Gastrocnemius medialis (tissue), 4 donors: ENCODE measurements at regions of chr7 and their contacts with region 1.

Region 1: DNA sequence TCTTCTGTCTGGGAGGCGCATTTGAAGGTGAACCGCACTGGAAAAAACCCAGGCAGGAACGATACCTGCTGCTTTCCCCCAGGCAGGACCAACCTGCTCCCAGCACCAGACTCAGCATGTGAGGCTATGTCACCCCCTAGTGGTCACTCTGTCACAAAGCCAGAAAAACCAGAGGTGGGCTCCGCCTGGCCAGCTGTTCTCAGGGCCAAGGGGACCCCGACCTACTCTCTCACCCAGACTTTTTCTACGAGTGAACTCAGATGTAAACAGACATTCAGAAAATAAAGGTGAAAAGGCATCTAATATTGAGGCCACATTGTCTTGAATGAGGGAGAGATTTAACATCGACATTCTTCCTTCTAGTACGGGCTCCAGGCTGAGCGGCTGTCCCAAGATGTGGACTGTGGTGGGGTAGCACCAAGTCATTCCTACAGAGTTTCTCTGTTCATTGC is 117.3 kb downstream of the PRKAG2 start:
- DNase-seq: peak in 1 of 2 donors; percentile 49
- ATAC-seq: peak; percentile 62 to 69
- H3K4me3 ChIP-seq: no peak overlapping the region
- H3K27ac ChIP-seq: no peak overlapping the region
- H3K4me1 ChIP-seq: peaks cover 13 to 14% of the 10 kb centered on the region in 2 donors
- H3K27me3 ChIP-seq: no peaks in the 10 kb centered on the region
- CTCF ChIP-seq: peak; percentile 83 to 93 (median 91)
- POLR2A ChIP-seq: no peak

Region 2: DNA sequence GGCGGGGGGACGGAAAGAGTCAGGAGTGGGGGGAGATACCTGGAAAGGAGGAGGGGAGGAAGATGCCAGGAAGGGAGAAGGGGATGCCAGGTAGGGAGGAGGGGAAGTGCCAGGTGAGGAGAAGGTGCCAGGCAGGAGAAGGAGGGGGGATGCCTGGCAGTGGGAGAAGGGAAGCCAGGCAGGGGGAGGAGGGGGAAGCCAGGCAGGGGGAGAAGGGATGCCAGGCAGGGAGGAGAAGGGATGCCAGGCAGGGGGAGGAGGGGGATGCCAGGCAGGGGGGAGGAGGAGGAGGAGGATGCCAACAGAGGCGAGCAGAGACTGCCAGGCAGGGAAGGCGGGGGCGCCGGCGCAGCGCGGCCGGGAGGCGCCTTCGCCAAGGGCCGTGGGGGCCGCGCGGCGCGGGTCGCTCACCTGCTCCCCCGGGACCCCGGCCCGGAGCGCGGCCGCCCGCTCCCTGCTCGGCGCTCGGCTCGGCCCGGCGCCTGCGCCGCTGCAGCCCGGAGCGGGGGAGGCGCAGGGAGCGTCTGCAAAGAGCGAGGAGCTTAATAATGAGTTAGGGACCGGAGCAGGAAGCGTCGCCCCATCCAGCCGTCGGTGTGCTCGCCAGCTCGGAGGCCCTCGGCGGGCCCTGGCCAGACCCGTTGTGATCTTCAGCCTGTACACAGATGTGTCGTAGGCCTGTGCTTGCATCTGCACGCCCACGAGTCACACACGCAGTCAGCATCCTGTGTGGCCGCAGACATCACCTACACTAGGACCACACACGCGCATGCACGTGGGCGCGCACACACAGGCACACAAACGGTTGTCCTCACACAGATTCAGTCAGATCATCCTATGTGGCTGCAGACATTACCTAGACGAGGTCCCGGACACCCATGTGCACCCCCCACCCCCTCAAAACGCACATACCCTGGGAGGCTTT is 482.7 kb before region 1 on chr7:
- in situ Hi-C with region 1: no loop called
- intact Hi-C with region 1: no loop called
- DNase-seq: no peak
- ATAC-seq: peak; percentile 33 to 36
- H3K4me3 ChIP-seq: peak overlapping the region; percentile 38 to 43 (median 40)
- H3K27ac ChIP-seq: no peak overlapping the region
- H3K4me1 ChIP-seq: peaks cover 5 to 17% of the 10 kb centered on the region in 2 donors
- H3K27me3 ChIP-seq: no peaks in the 10 kb centered on the region
- CTCF ChIP-seq: no peak
- POLR2A ChIP-seq: peak in 1 of 2 donors; percentile 8

Region 3: GRCh38 chr7:151315038-151315655 is 444.5 kb before region 1 on chr7:
- in situ Hi-C with region 1: no loop called
- intact Hi-C with region 1: loop called (anchors 1 kb)
- DNase-seq: peak; percentile 31 to 59
- ATAC-seq: peak; percentile 65 to 72
- H3K4me3 ChIP-seq: no peak overlapping the region
- H3K27ac ChIP-seq: no peak overlapping the region
- H3K4me1 ChIP-seq: peaks cover 6% of the 10 kb centered on the region in 2 donors
- H3K27me3 ChIP-seq: no peaks in the 10 kb centered on the region
- CTCF ChIP-seq: peak; percentile 60 to 83 (median 80)
- POLR2A ChIP-seq: no peak

Region 4: DNA sequence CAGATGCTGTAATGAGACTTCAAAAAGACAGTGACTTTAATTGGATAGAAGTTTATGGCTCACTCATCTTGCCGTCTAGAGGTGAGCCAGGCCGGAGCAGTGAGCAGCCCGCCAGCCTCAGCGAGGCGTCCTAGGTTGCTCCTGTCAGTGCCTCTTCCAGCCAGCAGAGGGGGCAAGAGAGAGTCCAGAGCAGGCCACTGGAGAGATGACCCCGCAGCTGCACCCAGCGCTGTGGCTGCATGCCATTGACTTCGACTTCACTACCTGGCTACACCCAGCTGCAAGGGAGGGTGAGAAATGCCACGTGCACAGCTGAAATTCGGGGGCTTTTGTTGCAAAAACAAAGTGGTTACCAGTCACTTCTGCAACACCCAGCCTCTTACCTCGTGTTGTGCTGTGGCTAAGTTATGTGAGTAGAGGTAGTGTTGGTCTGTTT is 391.5 kb before region 1 on chr7:
- in situ Hi-C with region 1: loop called (anchors 25 kb)
- intact Hi-C with region 1: loop called (anchors 2 kb)
- DNase-seq: peak; percentile 49 to 77
- ATAC-seq: peak; percentile 82 to 96
- H3K4me3 ChIP-seq: no peak overlapping the region
- H3K27ac ChIP-seq: no peak overlapping the region
- H3K4me1 ChIP-seq: peaks cover 0 to 3% of the 10 kb centered on the region in 2 donors
- H3K27me3 ChIP-seq: no peaks in the 10 kb centered on the region
- CTCF ChIP-seq: peak; percentile 86 to 95 (median 95)
- POLR2A ChIP-seq: no peak

Region 5: GRCh38 chr7:151570366-151570915 is 189.2 kb before region 1 on chr7:
- in situ Hi-C with region 1: no loop called
- intact Hi-C with region 1: loop called (anchors 1 kb)
- DNase-seq: no peak
- ATAC-seq: no peak
- H3K4me3 ChIP-seq: no peak overlapping the region
- H3K27ac ChIP-seq: no peak overlapping the region
- H3K4me1 ChIP-seq: peaks cover 0 to 3% of the 10 kb centered on the region in 2 donors
- H3K27me3 ChIP-seq: no peaks in the 10 kb centered on the region
- CTCF ChIP-seq: peak in 4 of 5 experiments; percentile 27 to 51 (median 42)
- POLR2A ChIP-seq: no peak

Region 6: DNA sequence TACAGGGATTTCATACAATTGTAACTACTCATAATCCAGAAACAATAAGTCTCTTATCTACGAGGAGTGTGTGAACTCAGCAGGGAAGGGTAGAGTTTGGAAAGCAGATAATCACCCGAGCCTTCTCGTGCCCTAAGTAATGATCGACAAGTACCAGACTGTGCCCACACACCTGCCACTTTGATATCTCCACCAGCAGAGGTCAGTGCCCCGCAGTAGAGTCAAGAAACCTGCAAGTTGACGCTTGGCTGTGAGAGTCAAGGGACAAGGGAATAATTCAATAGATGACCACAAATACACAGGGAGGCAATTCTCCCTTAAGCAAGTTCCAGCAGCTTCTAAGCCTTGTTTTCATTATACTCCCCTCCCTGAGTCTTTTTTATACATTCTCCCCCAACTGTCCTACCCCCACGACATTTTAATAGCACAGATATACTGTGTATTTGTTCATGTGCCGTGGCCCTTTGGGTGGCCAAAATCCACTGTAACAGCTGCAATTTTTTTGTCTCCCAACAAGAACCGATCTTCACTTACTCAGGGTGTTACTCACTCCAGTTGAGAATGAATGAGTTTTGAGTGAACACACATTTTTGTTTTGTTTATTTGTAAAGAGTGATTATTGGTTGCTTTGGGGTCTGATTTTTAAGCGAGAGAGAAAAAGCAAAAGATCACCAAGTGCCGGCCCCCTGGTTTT is 133.0 kb before region 1 on chr7:
- in situ Hi-C with region 1: loop called in 3 of 4 experiments (anchors 5 to 10 kb)
- intact Hi-C with region 1: loop called (anchors 1 kb)
- DNase-seq: peak; percentile 46 to 57
- ATAC-seq: peak; percentile 86 to 91
- H3K4me3 ChIP-seq: no peak overlapping the region
- H3K27ac ChIP-seq: no peak overlapping the region
- H3K4me1 ChIP-seq: peaks cover 10 to 13% of the 10 kb centered on the region in 2 donors
- H3K27me3 ChIP-seq: no peaks in the 10 kb centered on the region
- CTCF ChIP-seq: peak; percentile 53 to 79 (median 69)
- POLR2A ChIP-seq: no peak

Region 7: GRCh38 chr7:151851145-151851751 is 91.6 kb after region 1 on chr7:
- in situ Hi-C with region 1: no loop called
- intact Hi-C with region 1: no loop called
- DNase-seq: no peak
- ATAC-seq: peak in 1 of 2 donors; percentile 24
- H3K4me3 ChIP-seq: peak overlapping the region in 1 of 4 donors; percentile 18
- H3K27ac ChIP-seq: no peak overlapping the region
- H3K4me1 ChIP-seq: no peaks in the 10 kb centered on the region
- H3K27me3 ChIP-seq: no peaks in the 10 kb centered on the region
- CTCF ChIP-seq: no peak
- POLR2A ChIP-seq: no peak